ENCODE measurements at regions of chr3 and their contacts with region 1.

Region 1: GRCh38 chr3:9249273-9250192 is at the start of gene SRGAP3:
- DNase-seq: peak; percentile 45 to 85 (median 80)
- ATAC-seq: peak; percentile 99
- H3K4me3 ChIP-seq: peak within 1 kb of the TSS; percentile 91
- H3K4me3 Mint-ChIP-seq: peak within 1 kb of the TSS; percentile 82 to 99 (median 92)
- H3K27ac ChIP-seq: peak within 1 kb of the TSS; percentile 60
- H3K27ac Mint-ChIP-seq: peak within 1 kb of the TSS; percentile 3 to 89 (median 78)
- H3K4me1 ChIP-seq: peaks cover 0 to 6% of the 10 kb centered on the region in 2 donors
- H3K4me1 Mint-ChIP-seq: peaks cover 9 to 43% (median 28%) of the 10 kb centered on the region in 7 donors
- H3K27me3 ChIP-seq: no peaks in the 10 kb centered on the region
- H3K27me3 Mint-ChIP-seq: peaks cover 0 to 29% (median 4%) of the 10 kb centered on the region in 5 donors
- total RNA-seq, gene SRGAP3: 1.4 to 6.0 (median 4.8) TPM

Region 2: GRCh38 chr3:8784676-8785435 is 464.7 kb before region 1 on chr3:
- CTCF ChIA-PET with region 1: no interaction called
- POLR2A ChIA-PET with region 1: no interaction called
- intact Hi-C with region 1: no loop called
- DNase-seq: no peak
- ATAC-seq: no peak
- H3K4me3 ChIP-seq: no peak overlapping the region
- H3K4me3 Mint-ChIP-seq: no peak overlapping the region
- H3K27ac ChIP-seq: no peak overlapping the region
- H3K27ac Mint-ChIP-seq: no peak overlapping the region
- H3K4me1 ChIP-seq: no peaks in the 10 kb centered on the region
- H3K4me1 Mint-ChIP-seq: no peaks in the 10 kb centered on the region
- H3K27me3 ChIP-seq: no peaks in the 10 kb centered on the region
- H3K27me3 Mint-ChIP-seq: peaks cover 0 to 5% (median 0%) of the 10 kb centered on the region in 5 donors

Region 3: DNA sequence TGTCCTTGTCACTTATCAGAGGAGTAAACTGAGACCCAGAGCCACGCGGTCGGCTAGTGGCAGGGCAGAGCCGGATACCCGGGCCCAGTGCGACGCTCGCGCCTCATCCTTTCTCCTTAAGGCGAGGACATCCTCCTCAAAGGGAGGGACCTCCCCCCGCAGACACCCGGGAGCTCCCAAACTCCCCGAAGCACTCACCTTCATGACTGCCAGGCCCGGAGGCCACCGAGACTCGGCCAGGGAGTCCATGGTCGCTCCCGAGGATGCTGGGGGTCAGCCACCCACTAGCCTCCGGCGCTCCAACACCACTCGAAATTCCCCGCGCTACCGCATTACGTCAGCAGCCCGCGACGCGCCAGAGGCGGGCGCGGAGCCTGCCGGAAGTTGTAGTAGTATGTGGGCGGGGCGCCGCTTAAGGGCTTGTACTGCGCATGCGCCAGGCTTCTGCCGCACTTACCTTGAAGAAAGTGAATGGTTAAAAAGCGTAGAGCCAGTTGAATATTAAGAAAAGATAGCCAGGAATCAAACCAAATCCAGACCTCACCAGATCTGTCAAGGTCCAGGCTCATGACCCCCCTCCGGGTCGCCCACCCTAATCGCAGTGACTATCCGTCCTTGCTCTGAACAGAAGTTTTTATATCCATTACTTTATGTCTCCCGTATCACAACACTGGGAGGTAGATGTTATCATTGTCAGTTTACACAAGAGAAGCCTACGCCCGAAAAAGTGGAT is 286.2 kb before region 1 on chr3 and contains the start of gene RAD18:
- CTCF ChIA-PET with region 1: no interaction called
- POLR2A ChIA-PET with region 1: interaction called, 3 read pairs
- intact Hi-C with region 1: loop called in 1 of 2 experiments (anchors 1 kb)
- DNase-seq: peak; percentile 87 to 95 (median 92)
- ATAC-seq: peak; percentile 97
- H3K4me3 ChIP-seq: peak within 1 kb of the TSS; percentile 80
- H3K4me3 Mint-ChIP-seq: peak within 1 kb of the TSS; percentile 85 to 99 (median 96)
- H3K27ac ChIP-seq: peak within 1 kb of the TSS; percentile 94
- H3K27ac Mint-ChIP-seq: peak within 1 kb of the TSS; percentile 94 to 99 (median 97)
- H3K4me1 ChIP-seq: peaks cover 6 to 10% of the 10 kb centered on the region in 2 donors
- H3K4me1 Mint-ChIP-seq: peaks cover 7 to 45% (median 38%) of the 10 kb centered on the region in 7 donors
- H3K27me3 ChIP-seq: no peaks in the 10 kb centered on the region
- H3K27me3 Mint-ChIP-seq: peaks cover 0 to 8% (median 4%) of the 10 kb centered on the region in 5 donors
- total RNA-seq, gene RAD18: 9.3 to 36.4 (median 18.2) TPM

Region 4: GRCh38 chr3:8987645-8988383 is 261.7 kb before region 1 on chr3:
- CTCF ChIA-PET with region 1: no interaction called
- POLR2A ChIA-PET with region 1: no interaction called
- intact Hi-C with region 1: loop called in 1 of 2 experiments (anchors 1 kb)
- DNase-seq: peak; percentile 29 to 66 (median 53)
- ATAC-seq: peak; percentile 88
- H3K4me3 ChIP-seq: no peak overlapping the region
- H3K4me3 Mint-ChIP-seq: peak overlapping the region in 9 of 10 donors; percentile 43 to 75 (median 66)
- H3K27ac ChIP-seq: no peak overlapping the region
- H3K27ac Mint-ChIP-seq: peak overlapping the region in 2 of 9 donors; percentile 5 to 84
- H3K4me1 ChIP-seq: no peaks in the 10 kb centered on the region
- H3K4me1 Mint-ChIP-seq: peaks cover 0 to 7% (median 5%) of the 10 kb centered on the region in 7 donors
- H3K27me3 ChIP-seq: no peaks in the 10 kb centered on the region
- H3K27me3 Mint-ChIP-seq: no peaks in the 10 kb centered on the region

Region 5: DNA sequence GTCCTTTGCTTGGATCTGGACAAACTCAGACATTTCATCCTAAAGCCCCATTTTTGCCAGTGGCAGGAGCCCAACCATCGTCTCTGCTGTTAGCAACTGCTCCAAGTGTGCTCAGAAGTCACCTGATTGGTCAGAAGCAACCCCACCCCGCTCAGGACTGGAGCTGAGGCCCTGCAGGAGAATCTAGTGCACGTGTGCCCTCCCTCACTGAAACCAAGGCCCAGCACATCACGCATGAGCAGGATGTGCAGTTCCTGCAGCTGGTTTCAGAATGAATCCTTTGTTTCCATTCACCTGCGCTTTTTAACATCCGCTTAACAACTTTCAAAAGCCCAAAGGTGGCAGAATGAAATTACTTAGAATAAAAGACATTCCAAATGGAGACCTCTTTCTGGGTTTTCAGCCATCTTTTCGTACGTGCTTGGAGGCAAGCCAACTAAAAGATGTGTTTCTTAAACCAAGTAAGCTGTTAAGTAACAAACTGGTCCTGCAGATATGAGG is 81.2 kb before region 1 on chr3:
- CTCF ChIA-PET with region 1: no interaction called
- POLR2A ChIA-PET with region 1: no interaction called
- intact Hi-C with region 1: loop called in 1 of 2 experiments (anchors 1 kb)
- DNase-seq: peak in 6 of 9 donors; percentile 18 to 60 (median 37)
- ATAC-seq: no peak
- H3K4me3 ChIP-seq: no peak overlapping the region
- H3K4me3 Mint-ChIP-seq: peak overlapping the region in 7 of 10 donors; percentile 2 to 70 (median 19)
- H3K27ac ChIP-seq: peak overlapping the region; percentile 29
- H3K27ac Mint-ChIP-seq: peak overlapping the region in 6 of 9 donors; percentile 21 to 76 (median 46)
- H3K4me1 ChIP-seq: peaks cover 29 to 33% of the 10 kb centered on the region in 2 donors
- H3K4me1 Mint-ChIP-seq: peaks cover 7 to 56% (median 46%) of the 10 kb centered on the region in 7 donors
- H3K27me3 ChIP-seq: no peaks in the 10 kb centered on the region
- H3K27me3 Mint-ChIP-seq: no peaks in the 10 kb centered on the region

Region 6: DNA sequence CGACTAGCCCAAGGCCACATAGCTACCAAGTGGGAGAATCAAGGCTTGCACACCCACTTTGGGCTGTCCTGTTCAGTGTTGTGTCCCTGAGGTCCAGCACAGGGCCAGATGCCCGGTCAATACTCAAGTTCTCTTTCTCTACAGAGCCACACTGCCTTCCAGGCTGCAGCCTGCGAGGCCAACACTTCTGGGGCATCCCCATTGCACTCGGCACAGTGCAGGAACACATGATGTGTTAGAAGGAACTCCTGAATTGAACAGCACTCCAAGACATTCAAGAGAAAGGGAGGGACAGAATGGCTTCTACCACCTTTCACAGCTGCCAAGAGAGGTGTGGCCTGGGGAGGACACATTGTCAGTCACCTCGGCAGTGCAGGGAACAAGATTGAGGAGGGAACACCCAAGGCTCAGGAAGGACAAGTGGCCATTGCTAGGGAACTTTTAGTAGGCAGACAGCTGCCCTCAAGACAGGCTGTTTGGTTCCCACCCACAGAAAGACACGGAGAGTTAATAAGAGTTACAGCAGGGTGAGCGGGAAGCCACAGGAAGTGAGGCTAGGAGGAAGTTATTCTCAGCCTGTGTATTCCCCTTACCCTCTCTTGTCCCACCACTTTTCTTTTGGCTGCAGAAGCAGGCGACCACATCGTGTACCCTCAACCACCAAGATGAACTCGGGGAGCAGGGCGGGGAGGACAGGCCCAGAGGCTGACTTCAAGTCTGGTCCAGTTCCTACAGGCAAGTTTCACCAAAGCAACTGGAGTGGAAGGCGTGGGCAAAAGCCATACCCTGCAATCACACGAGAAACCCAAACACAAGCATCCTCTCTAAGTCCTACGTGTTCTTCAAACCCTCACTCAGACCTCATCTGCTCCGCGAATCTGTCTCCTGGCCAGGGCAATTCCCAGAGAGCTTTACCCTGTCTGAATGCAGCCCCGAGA is 69.4 kb before region 1 on chr3:
- CTCF ChIA-PET with region 1: no interaction called
- POLR2A ChIA-PET with region 1: no interaction called
- intact Hi-C with region 1: loop called in 1 of 2 experiments (anchors 5 kb)
- DNase-seq: peak in 4 of 9 donors; percentile 13 to 28 (median 14)
- ATAC-seq: peak; percentile 72
- H3K4me3 ChIP-seq: peak overlapping the region; percentile 50
- H3K4me3 Mint-ChIP-seq: peak overlapping the region; percentile 79 to 88 (median 84)
- H3K27ac ChIP-seq: peak overlapping the region; percentile 4
- H3K27ac Mint-ChIP-seq: peak overlapping the region; percentile 48 to 94 (median 76)
- H3K4me1 ChIP-seq: peaks cover 0 to 20% of the 10 kb centered on the region in 2 donors
- H3K4me1 Mint-ChIP-seq: peaks cover 18 to 48% (median 30%) of the 10 kb centered on the region in 7 donors
- H3K27me3 ChIP-seq: no peaks in the 10 kb centered on the region
- H3K27me3 Mint-ChIP-seq: peaks cover 0 to 5% (median 0%) of the 10 kb centered on the region in 5 donors